CD8-positive, alpha-beta T cell (primary cell): ENCODE measurements at regions of chr20 and their contacts with region 1.

Region 1: GRCh38 chr20:59165891-59166709 is 2.5 kb downstream of the ZNF831 start:
- DNase-seq: peak in 4 of 9 experiments; percentile 20 to 79 (median 60)
- ATAC-seq: peak; percentile 64
- H3K4me3 ChIP-seq: peak overlapping the region; percentile 59 to 62
- H3K4me3 Mint-ChIP-seq: peak overlapping the region; percentile 84
- H3K27ac ChIP-seq: peak overlapping the region; percentile 93 to 95
- H3K27ac Mint-ChIP-seq: peak overlapping the region; percentile 93
- H3K4me1 ChIP-seq: peaks cover 85% of the 10 kb centered on the region
- H3K4me1 Mint-ChIP-seq: peaks cover 93% of the 10 kb centered on the region
- H3K27me3 ChIP-seq: no peaks in the 10 kb centered on the region
- H3K27me3 Mint-ChIP-seq: no peaks in the 10 kb centered on the region
- CTCF ChIP-seq: no peak

Region 2: GRCh38 chr20:59042796-59043660 is 123.1 kb before region 1 on chr20:
- CTCF ChIA-PET with region 1: no interaction called
- POLR2A ChIA-PET with region 1: interaction called, 4 read pairs
- intact Hi-C with region 1: loop called in 1 of 2 experiments (anchors 5 kb)
- DNase-seq: peak; percentile 88 to 97 (median 94)
- ATAC-seq: peak; percentile 92
- H3K4me3 ChIP-seq: peak overlapping the region; percentile 67 to 94
- H3K4me3 Mint-ChIP-seq: peak overlapping the region; percentile 90
- H3K27ac ChIP-seq: peak overlapping the region; percentile 74 to 92
- H3K27ac Mint-ChIP-seq: peak overlapping the region; percentile 93
- H3K4me1 ChIP-seq: peaks cover 48% of the 10 kb centered on the region
- H3K4me1 Mint-ChIP-seq: peaks cover 52% of the 10 kb centered on the region
- H3K27me3 ChIP-seq: no peaks in the 10 kb centered on the region
- H3K27me3 Mint-ChIP-seq: no peaks in the 10 kb centered on the region
- CTCF ChIP-seq: no peak

Region 3: GRCh38 chr20:59120491-59120890 is 45.6 kb before region 1 on chr20:
- CTCF ChIA-PET with region 1: interaction called, 5 read pairs
- POLR2A ChIA-PET with region 1: interaction called, 23 read pairs
- intact Hi-C with region 1: loop called (anchors 1 to 2 kb)
- DNase-seq: peak in 6 of 9 experiments; percentile 16 to 82 (median 42)
- ATAC-seq: no peak
- H3K4me3 ChIP-seq: no peak overlapping the region
- H3K4me3 Mint-ChIP-seq: peak overlapping the region; percentile 61
- H3K27ac ChIP-seq: peak overlapping the region; percentile 77 to 87
- H3K27ac Mint-ChIP-seq: peak overlapping the region; percentile 98
- H3K4me1 ChIP-seq: peaks cover 84% of the 10 kb centered on the region
- H3K4me1 Mint-ChIP-seq: peaks cover 89% of the 10 kb centered on the region
- H3K27me3 ChIP-seq: no peaks in the 10 kb centered on the region
- H3K27me3 Mint-ChIP-seq: no peaks in the 10 kb centered on the region
- CTCF ChIP-seq: no peak

Region 4: GRCh38 chr20:59149651-59150504 is 16.2 kb before region 1 on chr20:
- CTCF ChIA-PET with region 1: interaction called, 7 read pairs
- POLR2A ChIA-PET with region 1: interaction called, 30 read pairs
- intact Hi-C with region 1: loop called (anchors 1 to 2 kb)
- DNase-seq: peak; percentile 66 to 96 (median 77)
- ATAC-seq: peak; percentile 74
- H3K4me3 ChIP-seq: peak overlapping the region in 1 of 2 experiments; percentile 21
- H3K4me3 Mint-ChIP-seq: peak overlapping the region; percentile 71
- H3K27ac ChIP-seq: peak overlapping the region; percentile 90 to 94
- H3K27ac Mint-ChIP-seq: peak overlapping the region; percentile 95
- H3K4me1 ChIP-seq: peaks cover 94% of the 10 kb centered on the region
- H3K4me1 Mint-ChIP-seq: peaks cover 94% of the 10 kb centered on the region
- H3K27me3 ChIP-seq: no peaks in the 10 kb centered on the region
- H3K27me3 Mint-ChIP-seq: no peaks in the 10 kb centered on the region
- CTCF ChIP-seq: no peak

Region 5: GRCh38 chr20:59177261-59178250 is 11.5 kb after region 1 on chr20:
- CTCF ChIA-PET with region 1: interaction called, 4 read pairs
- POLR2A ChIA-PET with region 1: interaction called, 15 read pairs
- intact Hi-C with region 1: loop called in 1 of 2 experiments (anchors 1 kb)
- DNase-seq: peak in 5 of 9 experiments; percentile 46 to 83 (median 55)
- ATAC-seq: peak; percentile 76
- H3K4me3 ChIP-seq: peak overlapping the region in 1 of 2 experiments; percentile 26
- H3K4me3 Mint-ChIP-seq: peak overlapping the region; percentile 69
- H3K27ac ChIP-seq: peak overlapping the region; percentile 64 to 92
- H3K27ac Mint-ChIP-seq: peak overlapping the region; percentile 94
- H3K4me1 ChIP-seq: peaks cover 75% of the 10 kb centered on the region
- H3K4me1 Mint-ChIP-seq: peaks cover 94% of the 10 kb centered on the region
- H3K27me3 ChIP-seq: no peaks in the 10 kb centered on the region
- H3K27me3 Mint-ChIP-seq: no peaks in the 10 kb centered on the region
- CTCF ChIP-seq: no peak

Region 6: GRCh38 chr20:59253779-59254319 is 87.7 kb after region 1 on chr20:
- CTCF ChIA-PET with region 1: no interaction called
- POLR2A ChIA-PET with region 1: interaction called, 7 read pairs
- intact Hi-C with region 1: loop called (anchors 5 kb)
- DNase-seq: peak in 7 of 9 experiments; percentile 26 to 70 (median 40)
- ATAC-seq: peak; percentile 61
- H3K4me3 ChIP-seq: peak overlapping the region in 1 of 2 experiments; percentile 18
- H3K4me3 Mint-ChIP-seq: peak overlapping the region; percentile 75
- H3K27ac ChIP-seq: peak overlapping the region; percentile 57 to 59
- H3K27ac Mint-ChIP-seq: peak overlapping the region; percentile 98
- H3K4me1 ChIP-seq: peaks cover 53% of the 10 kb centered on the region
- H3K4me1 Mint-ChIP-seq: peaks cover 74% of the 10 kb centered on the region
- H3K27me3 ChIP-seq: no peaks in the 10 kb centered on the region
- H3K27me3 Mint-ChIP-seq: no peaks in the 10 kb centered on the region
- CTCF ChIP-seq: no peak